Heart right ventricle (tissue), 16 donors: ENCODE measurements at regions of chr13 and their contacts with region 1.

Region 1: DNA sequence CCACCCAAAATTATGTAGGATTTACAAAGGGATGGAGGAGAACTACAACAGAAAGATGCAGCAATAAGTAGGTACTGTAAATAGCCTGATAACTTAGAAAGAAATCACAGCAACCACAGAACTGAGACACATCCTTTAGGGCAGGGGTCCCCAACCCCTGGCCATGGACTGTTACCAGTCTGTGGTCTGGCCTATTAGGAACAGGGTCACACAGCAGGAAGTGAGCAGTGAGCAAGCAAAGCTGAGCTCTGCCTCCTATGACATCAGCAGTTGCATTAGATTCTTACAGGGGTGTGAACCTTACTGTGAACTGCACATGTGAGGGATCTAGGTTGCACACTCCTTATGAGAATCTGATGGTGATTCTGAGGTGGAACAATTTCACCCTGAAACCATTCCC is 997.6 kb downstream of the DIAPH3 start:
- DNase-seq: no peak
- ATAC-seq: no peak
- H3K4me3 ChIP-seq: no peak overlapping the region
- H3K27ac ChIP-seq: no peak overlapping the region
- H3K4me1 ChIP-seq: no peaks in the 10 kb centered on the region
- H3K27me3 ChIP-seq: no peaks in the 10 kb centered on the region
- CTCF ChIP-seq: no peak

Region 2: DNA sequence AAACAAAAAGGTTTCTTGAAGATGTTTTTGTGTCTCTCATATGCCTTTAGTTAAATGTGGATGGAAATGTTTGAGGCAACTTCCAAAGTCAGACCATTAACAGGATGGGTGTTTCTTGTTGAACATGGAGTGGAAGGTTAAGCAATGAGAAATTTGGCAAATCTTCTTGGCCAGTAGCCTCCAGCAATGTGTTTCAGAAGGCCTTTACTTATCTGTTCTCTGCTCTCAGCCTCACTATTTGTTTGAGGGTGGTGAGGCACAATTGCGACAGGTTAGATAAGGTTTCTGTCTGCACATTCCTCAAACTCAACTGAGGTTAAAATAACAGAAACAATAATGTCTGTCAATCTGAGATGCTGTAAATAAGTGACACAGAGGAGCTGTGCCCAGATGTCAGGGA is 21.5 kb before region 1 on chr13:
- intact Hi-C with region 1: loop called in 1 of 10 experiments (anchors 2 kb)
- DNase-seq: no peak
- ATAC-seq: peak in 1 of 8 donors; percentile 68
- H3K4me3 ChIP-seq: no peak overlapping the region
- H3K27ac ChIP-seq: no peak overlapping the region
- H3K4me1 ChIP-seq: no peaks in the 10 kb centered on the region
- H3K27me3 ChIP-seq: no peaks in the 10 kb centered on the region
- CTCF ChIP-seq: no peak

Region 3: DNA sequence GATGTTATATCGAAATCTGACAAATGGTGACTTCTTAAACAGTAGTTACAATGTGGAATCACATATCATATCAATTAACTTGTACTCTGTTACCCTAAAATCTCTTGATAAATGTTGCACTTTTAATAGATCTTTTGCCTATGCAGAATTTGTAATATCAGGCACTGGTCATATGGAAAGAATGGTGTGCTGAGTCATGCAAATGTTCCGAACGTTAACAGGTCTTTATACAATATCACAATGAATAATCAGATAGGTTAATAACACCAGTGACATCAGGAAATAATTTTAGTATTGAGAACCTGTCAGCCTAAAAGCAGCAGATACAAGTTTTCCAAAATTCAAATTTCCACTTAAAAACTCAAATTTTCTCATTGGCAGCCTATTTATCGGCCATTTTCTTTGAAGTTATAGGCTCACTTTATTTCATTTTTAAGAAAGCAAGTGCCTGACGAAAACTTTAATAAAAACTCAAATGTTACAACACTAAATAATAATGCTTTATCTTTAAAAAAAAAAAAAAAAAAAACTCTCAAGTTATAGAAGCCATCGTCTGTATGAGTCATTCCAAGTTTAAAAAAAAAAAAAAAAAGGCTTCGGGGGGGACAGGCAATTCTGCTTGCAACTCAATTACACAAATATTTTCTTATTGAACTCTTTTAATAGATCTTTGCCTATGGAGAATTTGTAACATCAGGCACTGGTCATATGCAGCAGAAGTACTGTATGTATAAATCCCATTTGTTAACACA is 816.6 kb after region 1 on chr13:
- intact Hi-C with region 1: no loop called
- DNase-seq: no peak
- ATAC-seq: no peak
- H3K4me3 ChIP-seq: no peak overlapping the region
- H3K27ac ChIP-seq: no peak overlapping the region
- H3K4me1 ChIP-seq: no peaks in the 10 kb centered on the region
- H3K27me3 ChIP-seq: no peaks in the 10 kb centered on the region
- CTCF ChIP-seq: no peak